Breast epithelium (tissue), 4 donors: ENCODE measurements at regions of chr16 and their contacts with region 1.

Region 1: GRCh38 chr16:74999609-75000480 is 1.0 kb downstream of the ZNRF1 start:
- DNase-seq: peak; percentile 48 to 66
- H3K4me3 ChIP-seq: peak overlapping the region; percentile 79 to 94 (median 80)
- H3K27ac ChIP-seq: peak overlapping the region; percentile 84 to 86
- H3K4me1 ChIP-seq: peaks cover 0 to 6% of the 10 kb centered on the region in 2 donors
- H3K27me3 ChIP-seq: no peaks in the 10 kb centered on the region
- CTCF ChIP-seq: no peak
- POLR2A ChIP-seq: no peak

Region 2: DNA sequence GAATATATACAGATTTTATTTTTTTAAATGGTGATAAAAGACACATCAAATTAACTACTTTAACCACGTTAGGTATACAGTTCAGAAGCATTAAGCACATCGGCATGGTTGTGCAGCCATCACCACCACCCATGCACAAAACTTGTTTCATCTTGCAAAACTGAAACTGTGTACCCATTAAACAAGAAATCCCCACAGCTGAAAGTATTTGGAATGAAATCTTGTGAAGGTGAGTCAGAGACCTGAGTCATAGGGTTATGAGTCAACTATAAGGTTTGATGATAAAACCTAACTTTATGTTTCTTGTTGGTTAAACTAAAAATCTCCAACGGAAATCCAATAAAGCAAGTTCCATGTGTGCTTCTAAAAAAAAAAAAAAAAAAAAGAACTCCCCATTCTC is 1264.8 kb before region 1 on chr16:
- intact Hi-C with region 1: no loop called
- DNase-seq: no peak
- H3K4me3 ChIP-seq: no peak overlapping the region
- H3K27ac ChIP-seq: no peak overlapping the region
- H3K4me1 ChIP-seq: no peaks in the 10 kb centered on the region
- H3K27me3 ChIP-seq: peaks cover 0 to 12% of the 10 kb centered on the region in 2 donors
- CTCF ChIP-seq: no peak
- POLR2A ChIP-seq: no peak

Region 3: GRCh38 chr16:75110637-75111513 is 111.0 kb after region 1 on chr16:
- intact Hi-C with region 1: loop called (anchors 1 kb)
- DNase-seq: peak; percentile 80 to 88
- H3K4me3 ChIP-seq: peak overlapping the region; percentile 17 to 61 (median 34)
- H3K27ac ChIP-seq: peak overlapping the region; percentile 84 to 91
- H3K4me1 ChIP-seq: peaks cover 27 to 33% of the 10 kb centered on the region in 2 donors
- H3K27me3 ChIP-seq: no peaks in the 10 kb centered on the region
- CTCF ChIP-seq: peak; percentile 86 to 94 (median 91)
- POLR2A ChIP-seq: no peak